MCF 10A (cell line): ENCODE measurements at regions of chr11 and their contacts with region 1.

Region 1: DNA sequence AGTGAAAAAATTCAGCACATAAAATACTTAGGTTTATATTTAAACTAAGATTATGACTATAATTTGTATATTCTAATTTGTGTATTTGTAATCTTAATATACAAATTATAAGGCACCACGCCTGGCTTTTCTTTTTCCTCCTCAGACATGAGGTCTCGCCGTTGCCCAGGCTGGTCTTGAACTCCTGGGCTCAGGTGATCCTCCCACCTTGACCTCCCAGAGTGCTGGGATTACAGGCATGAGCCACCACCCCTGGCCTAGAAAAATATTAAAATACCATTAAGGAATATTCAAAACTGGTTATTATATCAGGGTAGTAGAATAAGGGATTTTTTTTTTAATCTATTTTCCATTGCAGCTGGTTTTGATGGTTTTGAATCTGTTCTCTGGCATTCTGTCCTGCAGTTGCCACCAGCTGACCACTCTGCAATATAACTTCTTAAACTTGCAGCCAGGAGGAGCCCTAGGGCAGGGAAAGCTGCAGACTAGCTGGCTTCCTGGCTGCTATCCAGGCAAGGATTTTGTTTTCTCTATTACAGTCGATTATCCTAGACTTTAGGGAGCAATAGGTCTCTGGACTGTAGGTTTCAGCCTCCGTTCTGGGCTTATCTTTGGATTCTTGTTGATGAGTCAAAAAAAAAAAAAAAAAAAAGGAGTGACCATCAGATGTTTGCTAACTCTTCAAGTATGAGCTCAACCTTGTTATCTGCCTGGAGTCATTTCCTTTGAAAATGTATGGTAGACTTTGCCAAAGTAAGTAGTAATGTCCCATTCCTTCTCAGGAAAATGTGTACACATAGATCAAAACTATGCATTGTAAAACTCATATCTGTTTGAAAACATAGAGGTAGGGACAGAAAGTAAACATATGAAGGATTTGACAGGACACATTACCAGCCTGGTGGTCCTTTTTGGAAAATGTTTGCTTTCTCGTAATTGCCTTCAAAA is 13.2 kb downstream of the POLA2 start:
- DNase-seq: peak; percentile 88
- H3K4me3 Mint-ChIP-seq: no peak overlapping the region
- H3K27ac Mint-ChIP-seq: no peak overlapping the region
- H3K4me1 Mint-ChIP-seq: peaks cover 15% of the 10 kb centered on the region
- H3K27me3 Mint-ChIP-seq: no peaks in the 10 kb centered on the region
- CTCF ChIP-seq: peak; percentile 90

Region 2: GRCh38 chr11:64762674-64763525 is 512.1 kb before region 1 on chr11:
- CTCF ChIA-PET with region 1: no interaction called
- POLR2A ChIA-PET with region 1: no interaction called
- intact Hi-C with region 1: no loop called
- DNase-seq: no peak
- H3K4me3 Mint-ChIP-seq: no peak overlapping the region
- H3K27ac Mint-ChIP-seq: no peak overlapping the region
- H3K4me1 Mint-ChIP-seq: no peaks in the 10 kb centered on the region
- H3K27me3 Mint-ChIP-seq: no peaks in the 10 kb centered on the region
- CTCF ChIP-seq: no peak

Region 3: GRCh38 chr11:65261591-65262380 is 13.2 kb before region 1 on chr11 and contains the start of gene POLA2:
- CTCF ChIA-PET with region 1: interaction called, 35 read pairs
- POLR2A ChIA-PET with region 1: interaction called, 9 read pairs
- intact Hi-C with region 1: no loop called
- DNase-seq: peak; percentile 96
- H3K4me3 Mint-ChIP-seq: peak within 1 kb of the TSS; percentile 81
- H3K27ac Mint-ChIP-seq: peak within 1 kb of the TSS; percentile 95
- H3K4me1 Mint-ChIP-seq: peaks cover 9% of the 10 kb centered on the region
- H3K27me3 Mint-ChIP-seq: no peaks in the 10 kb centered on the region
- CTCF ChIP-seq: no peak
- total RNA-seq, gene POLA2: 8.8 and 10.3 TPM in 2 replicates

Region 4: GRCh38 chr11:65321828-65322485 is 46.9 kb after region 1 on chr11:
- CTCF ChIA-PET with region 1: interaction called, 335 read pairs
- POLR2A ChIA-PET with region 1: interaction called, 143 read pairs
- intact Hi-C with region 1: no loop called
- DNase-seq: no peak
- H3K4me3 Mint-ChIP-seq: no peak overlapping the region
- H3K27ac Mint-ChIP-seq: no peak overlapping the region
- H3K4me1 Mint-ChIP-seq: no peaks in the 10 kb centered on the region
- H3K27me3 Mint-ChIP-seq: no peaks in the 10 kb centered on the region
- CTCF ChIP-seq: no peak

Region 5: GRCh38 chr11:65354265-65355012 is 79.4 kb after region 1 on chr11 and contains the start of gene TIGD3:
- CTCF ChIA-PET with region 1: interaction called, 12 read pairs
- POLR2A ChIA-PET with region 1: no interaction called
- intact Hi-C with region 1: no loop called
- DNase-seq: peak; percentile 95
- H3K4me3 Mint-ChIP-seq: peak within 1 kb of the TSS; percentile 72
- H3K27ac Mint-ChIP-seq: no peak within 1 kb of the TSS
- H3K4me1 Mint-ChIP-seq: peaks cover 18% of the 10 kb centered on the region
- H3K27me3 Mint-ChIP-seq: no peaks in the 10 kb centered on the region
- CTCF ChIP-seq: no peak
- total RNA-seq, gene TIGD3: 0.14 TPM in 1 of 2 replicates, not detected in the other

Region 6: DNA sequence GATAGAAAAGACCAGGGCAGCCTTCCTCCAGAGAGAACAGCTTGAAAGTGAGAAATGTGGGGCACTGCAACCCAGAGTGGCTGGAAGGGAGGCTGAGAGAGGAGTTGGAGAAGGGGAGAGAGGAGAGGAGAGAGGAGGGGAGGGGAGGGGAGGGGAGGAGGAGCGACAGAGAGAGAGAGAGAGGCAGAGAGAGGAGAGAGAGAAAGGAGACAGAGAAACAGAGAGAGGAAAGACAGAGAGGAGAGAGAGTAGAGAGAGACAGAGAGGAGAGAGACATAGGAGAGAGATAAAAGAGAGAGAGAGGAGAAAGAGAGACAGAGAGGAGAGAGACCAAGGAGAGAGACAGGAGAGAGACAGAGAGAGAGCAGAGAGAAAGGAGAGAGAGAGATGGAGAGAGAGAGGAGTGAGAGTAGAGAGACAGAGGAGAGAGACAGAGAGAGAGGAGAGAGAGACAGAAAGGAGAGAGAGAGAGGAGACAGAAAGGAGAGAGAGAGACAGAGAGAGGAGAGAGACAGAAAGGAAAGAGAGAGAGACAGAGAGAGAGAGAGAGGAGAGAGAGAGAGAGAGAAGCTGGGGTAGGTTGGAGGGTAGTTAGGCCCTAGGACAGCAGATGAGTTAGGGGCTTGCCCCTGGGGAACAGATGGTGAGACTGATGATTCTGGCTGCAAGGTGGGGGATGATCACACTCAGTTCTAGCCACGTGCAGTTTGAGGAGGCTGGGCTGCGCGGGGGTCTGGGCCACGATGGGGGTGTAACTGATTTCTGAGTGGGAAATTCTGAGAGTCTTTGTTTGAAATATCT is 241.3 kb after region 1 on chr11:
- CTCF ChIA-PET with region 1: no interaction called
- POLR2A ChIA-PET with region 1: no interaction called
- intact Hi-C with region 1: loop called (anchors 10 kb)
- DNase-seq: no peak
- H3K4me3 Mint-ChIP-seq: no peak overlapping the region
- H3K27ac Mint-ChIP-seq: no peak overlapping the region
- H3K4me1 Mint-ChIP-seq: peaks cover 7% of the 10 kb centered on the region
- H3K27me3 Mint-ChIP-seq: peaks cover 13% of the 10 kb centered on the region
- CTCF ChIP-seq: no peak